ENCODE measurements at regions of chr1 and their contacts with region 1.

Region 1: DNA sequence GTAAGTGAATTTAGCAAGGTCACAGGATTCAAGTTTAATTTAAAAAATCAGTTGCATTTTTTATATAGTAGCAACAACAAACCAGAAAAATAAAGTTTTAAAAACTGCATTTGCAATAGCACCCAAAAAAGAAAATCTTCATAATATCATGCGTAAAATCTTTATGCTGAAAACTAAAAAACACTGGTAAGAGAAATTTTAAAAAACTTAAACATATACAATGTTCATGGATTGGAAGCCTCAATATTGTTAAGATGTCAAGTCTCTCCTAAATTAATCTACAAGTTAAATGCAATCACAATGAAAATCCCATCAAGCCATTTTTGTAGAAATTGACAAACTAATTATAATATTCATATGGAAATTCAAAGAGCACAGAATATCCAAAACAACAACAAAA is 65.6 kb downstream of the ENAH start:
- DNase-seq: no peak
- H3K4me3 ChIP-seq: no peak overlapping the region
- H3K27ac ChIP-seq: no peak overlapping the region
- H3K4me1 ChIP-seq: peaks cover 14% of the 10 kb centered on the region
- H3K27me3 ChIP-seq: no peaks in the 10 kb centered on the region
- CTCF ChIP-seq: no peak

Region 2: GRCh38 chr1:225517697-225518096 is 69.6 kb before region 1 on chr1:
- CTCF ChIA-PET with region 1: interaction called, 10 read pairs
- POLR2A ChIA-PET with region 1: no interaction called
- intact Hi-C with region 1: no loop called
- DNase-seq: peak; percentile 31
- H3K4me3 ChIP-seq: no peak overlapping the region
- H3K27ac ChIP-seq: no peak overlapping the region
- H3K4me1 ChIP-seq: peaks cover 8% of the 10 kb centered on the region
- H3K27me3 ChIP-seq: no peaks in the 10 kb centered on the region
- CTCF ChIP-seq: peak; percentile 40; the same call in 1 of the 2 replicates

Measured in A673 (cell line).